Psoas muscle (tissue), 8 donors: ENCODE measurements at regions of chr1 and their contacts with region 1.

Region 1: GRCh38 chr1:45569962-45570581 is 13.8 kb upstream of the NASP start:
- DNase-seq: peak; percentile 57 to 78
- ATAC-seq: peak; percentile 87 to 94 (median 92)
- H3K4me3 ChIP-seq: no peak overlapping the region
- H3K27ac ChIP-seq: no peak overlapping the region
- H3K4me1 ChIP-seq: no peaks in the 10 kb centered on the region
- H3K27me3 ChIP-seq: no peaks in the 10 kb centered on the region
- CTCF ChIP-seq: peak; percentile 99

Region 2: DNA sequence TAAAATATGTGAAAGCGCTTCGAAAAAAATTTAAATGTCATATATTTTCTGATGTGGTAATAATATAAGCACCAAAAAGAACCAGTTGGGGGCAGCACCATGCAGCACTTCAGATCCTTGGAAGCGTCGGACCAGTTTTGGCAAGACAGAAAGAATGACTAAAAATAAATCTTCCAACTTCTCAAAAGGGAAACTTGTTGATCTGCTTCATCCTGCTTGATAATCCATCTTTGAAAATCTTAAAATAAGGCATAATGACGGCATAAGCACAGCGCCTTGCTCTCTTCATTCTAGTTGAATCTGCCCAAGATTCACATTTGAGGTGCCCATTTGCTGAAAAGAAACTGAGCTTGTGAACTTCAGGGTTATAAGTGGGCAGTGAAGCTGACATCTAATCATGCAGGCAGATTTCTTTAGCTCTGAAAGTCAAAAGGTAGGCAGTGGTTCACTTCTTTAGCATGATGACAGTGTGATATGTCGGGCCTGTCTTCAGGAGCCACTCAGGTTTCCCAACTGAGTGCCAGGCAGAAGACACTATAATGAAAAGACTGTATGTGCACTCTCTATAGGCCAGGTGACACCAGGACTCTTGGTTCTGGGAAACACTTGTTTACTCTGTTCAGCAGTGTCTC is 210.1 kb before region 1 on chr1:
- intact Hi-C with region 1: loop called (anchors 2 to 5 kb)
- DNase-seq: peak; percentile 49 to 76
- ATAC-seq: peak; percentile 75 to 89 (median 80)
- H3K4me3 ChIP-seq: peak overlapping the region; percentile 45
- H3K27ac ChIP-seq: peak overlapping the region; percentile 77
- H3K4me1 ChIP-seq: peaks cover 34% of the 10 kb centered on the region
- H3K27me3 ChIP-seq: no peaks in the 10 kb centered on the region
- CTCF ChIP-seq: peak; percentile 77

Region 3: GRCh38 chr1:45512641-45513054 is 57.4 kb before region 1 on chr1:
- intact Hi-C with region 1: loop called (anchors 2 kb)
- DNase-seq: peak; percentile 43 to 74
- ATAC-seq: peak; percentile 72 to 87 (median 84)
- H3K4me3 ChIP-seq: no peak overlapping the region
- H3K27ac ChIP-seq: peak overlapping the region; percentile 42
- H3K4me1 ChIP-seq: peaks cover 3% of the 10 kb centered on the region
- H3K27me3 ChIP-seq: no peaks in the 10 kb centered on the region
- CTCF ChIP-seq: peak; percentile 68